ENCODE measurements at regions of chr7 and their contacts with region 1.

Region 1: GRCh38 chr7:142782922-142783900 is 12.4 kb downstream of the PRSS2 start:
- DNase-seq: peak; percentile 75
- H3K4me3 ChIP-seq: peak overlapping the region; percentile 38 to 49 (median 43)
- H3K27ac ChIP-seq: no peak overlapping the region
- H3K4me1 ChIP-seq: no peaks in the 10 kb centered on the region
- H3K27me3 ChIP-seq: no peaks in the 10 kb centered on the region
- CTCF ChIP-seq: peak; percentile 97

Region 2: DNA sequence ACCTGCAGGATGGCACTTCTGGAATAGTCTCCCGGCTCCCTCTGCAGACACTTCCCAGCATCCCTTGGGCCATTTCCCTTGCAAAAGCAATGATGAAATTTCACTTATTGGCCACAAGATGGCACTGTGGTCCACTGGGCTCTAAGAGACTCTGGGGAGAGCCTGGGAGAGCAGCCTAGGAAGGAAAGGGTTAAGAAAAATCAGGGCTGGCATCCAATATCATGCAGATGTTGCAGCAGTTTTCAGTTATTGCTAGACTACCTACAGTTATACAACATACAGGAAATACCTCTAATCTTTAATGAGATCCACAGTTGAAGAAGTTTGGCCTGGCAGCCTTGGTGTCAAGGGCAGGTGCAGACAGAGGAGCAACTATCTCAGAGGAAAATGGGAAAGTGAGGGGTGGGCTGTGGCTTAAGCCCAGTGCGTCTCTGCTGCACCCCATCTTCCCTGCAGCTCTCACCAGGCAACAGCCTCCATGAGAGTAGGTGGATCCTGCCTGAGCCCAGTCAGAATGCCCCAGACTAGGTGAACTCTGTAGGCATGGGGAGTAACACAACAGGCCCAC is 425.2 kb before region 1 on chr7:
- CTCF ChIA-PET with region 1: no interaction called
- dilution Hi-C with region 1: no loop called
- in situ Hi-C with region 1: no loop called
- intact Hi-C with region 1: loop called (anchors 10 kb)
- DNase-seq: peak; percentile 65
- H3K4me3 ChIP-seq: no peak overlapping the region
- H3K27ac ChIP-seq: no peak overlapping the region
- H3K4me1 ChIP-seq: no peaks in the 10 kb centered on the region
- H3K27me3 ChIP-seq: no peaks in the 10 kb centered on the region
- CTCF ChIP-seq: peak; percentile 82 to 92

Region 3: GRCh38 chr7:142478479-142479072 is 304.6 kb before region 1 on chr7:
- CTCF ChIA-PET with region 1: interaction called, 12 read pairs
- dilution Hi-C with region 1: no loop called
- in situ Hi-C with region 1: no loop called
- intact Hi-C with region 1: no loop called
- DNase-seq: peak; percentile 46
- H3K4me3 ChIP-seq: no peak overlapping the region
- H3K27ac ChIP-seq: no peak overlapping the region
- H3K4me1 ChIP-seq: peaks cover 21% of the 10 kb centered on the region
- H3K27me3 ChIP-seq: no peaks in the 10 kb centered on the region
- CTCF ChIP-seq: peak; percentile 71 to 76

Region 4: DNA sequence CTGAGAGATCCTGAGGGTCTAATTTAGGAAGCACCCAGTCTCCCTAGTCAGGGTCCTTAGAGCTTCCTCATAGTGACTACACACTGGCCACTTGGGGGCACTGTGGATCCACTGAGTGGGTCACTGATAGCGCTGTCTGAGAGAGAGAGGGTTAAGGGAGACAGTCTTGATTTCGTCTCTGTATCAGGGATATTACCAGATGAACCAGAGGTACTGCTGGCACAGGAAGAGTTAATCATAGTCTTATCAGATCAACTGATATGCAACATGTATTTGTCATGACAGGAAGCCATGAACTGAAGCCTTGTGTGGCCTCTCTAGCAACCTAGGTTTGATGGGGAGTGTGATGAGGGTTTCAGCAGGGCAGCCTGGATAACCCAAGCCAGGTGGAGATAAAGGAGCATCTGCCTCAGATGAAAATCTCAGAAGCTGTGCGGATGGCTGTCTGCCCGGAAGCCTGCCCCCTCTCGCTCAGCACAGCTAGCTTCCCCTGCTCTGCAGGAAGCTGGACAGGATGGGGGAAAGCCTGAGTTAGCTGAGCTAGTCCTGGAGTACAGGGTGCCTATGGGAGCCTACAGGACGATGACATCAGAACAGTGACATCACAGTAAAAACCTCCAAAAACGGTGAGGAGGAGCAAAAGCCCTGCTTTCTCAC is 248.0 kb before region 1 on chr7:
- CTCF ChIA-PET with region 1: interaction called, 23 read pairs
- dilution Hi-C with region 1: loop called (anchors 5 kb)
- in situ Hi-C with region 1: loop called (anchors 5 to 10 kb)
- intact Hi-C with region 1: loop called (anchors 1 kb)
- DNase-seq: peak; percentile 70
- H3K4me3 ChIP-seq: no peak overlapping the region
- H3K27ac ChIP-seq: no peak overlapping the region
- H3K4me1 ChIP-seq: peaks cover 24% of the 10 kb centered on the region
- H3K27me3 ChIP-seq: no peaks in the 10 kb centered on the region
- CTCF ChIP-seq: peak; percentile 94 to 98

Region 5: GRCh38 chr7:142626420-142627035 is 156.7 kb before region 1 on chr7:
- CTCF ChIA-PET with region 1: interaction called, 37 read pairs
- dilution Hi-C with region 1: no loop called
- in situ Hi-C with region 1: loop called in 1 of 2 experiments (anchors 10 kb)
- intact Hi-C with region 1: no loop called
- DNase-seq: peak; percentile 17
- H3K4me3 ChIP-seq: no peak overlapping the region
- H3K27ac ChIP-seq: no peak overlapping the region
- H3K4me1 ChIP-seq: no peaks in the 10 kb centered on the region
- H3K27me3 ChIP-seq: no peaks in the 10 kb centered on the region
- CTCF ChIP-seq: peak; percentile 53 to 62

Region 6: GRCh38 chr7:142711746-142712619 is 71.2 kb before region 1 on chr7:
- CTCF ChIA-PET with region 1: no interaction called
- dilution Hi-C with region 1: no loop called
- in situ Hi-C with region 1: no loop called
- intact Hi-C with region 1: loop called (anchors 1 kb)
- DNase-seq: peak; percentile 8
- H3K4me3 ChIP-seq: no peak overlapping the region
- H3K27ac ChIP-seq: no peak overlapping the region
- H3K4me1 ChIP-seq: no peaks in the 10 kb centered on the region
- H3K27me3 ChIP-seq: peaks cover 4% of the 10 kb centered on the region
- CTCF ChIP-seq: peak; percentile 65 to 71

Measured in mammary epithelial cell (primary cell).